MCF 10A (cell line): ENCODE measurements at regions of chr7 and their contacts with region 1.

Region 1: DNA sequence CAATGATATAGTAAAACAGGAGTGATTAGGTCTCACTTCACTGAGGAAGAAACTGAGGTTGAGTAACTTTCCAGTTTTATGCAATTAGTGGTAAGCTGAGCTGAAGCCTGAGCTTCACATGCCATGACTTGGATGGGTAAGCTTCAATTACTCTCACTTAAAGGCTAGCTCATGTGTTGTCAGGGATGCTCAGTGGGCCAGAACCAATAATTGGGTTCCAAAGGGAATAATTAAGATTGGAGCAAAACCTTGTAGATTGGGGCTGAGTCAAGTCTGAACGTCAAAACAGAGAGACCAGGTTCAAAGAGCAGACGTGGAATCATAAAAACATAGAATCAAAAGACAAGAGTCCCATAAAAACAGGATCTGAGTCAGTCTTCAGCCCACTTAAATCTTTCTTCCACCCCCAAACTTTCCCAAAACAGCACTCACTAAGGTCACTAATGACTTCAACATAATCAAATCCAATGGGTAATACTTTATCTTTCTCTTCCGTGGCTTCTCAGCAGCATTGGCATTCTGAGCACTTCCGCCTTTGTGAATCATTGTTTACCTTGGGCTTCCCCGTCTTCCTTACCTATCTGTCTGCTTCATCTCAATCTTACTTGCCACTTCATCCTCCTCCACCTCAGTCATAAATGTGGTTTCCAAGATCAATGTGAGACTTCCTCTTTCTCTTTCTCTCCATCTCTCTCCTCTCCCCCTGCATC is 23.0 kb upstream of the EGFR start:
- DNase-seq: peak; percentile 73
- H3K4me3 Mint-ChIP-seq: peak overlapping the region; percentile 11
- H3K27ac Mint-ChIP-seq: peak overlapping the region; percentile 90
- H3K4me1 Mint-ChIP-seq: peaks cover 22% of the 10 kb centered on the region
- H3K27me3 Mint-ChIP-seq: no peaks in the 10 kb centered on the region
- CTCF ChIP-seq: no peak

Region 2: GRCh38 chr7:54985405-54986330 is 10.1 kb before region 1 on chr7:
- CTCF ChIA-PET with region 1: interaction called, 3 read pairs
- POLR2A ChIA-PET with region 1: interaction called, 12 read pairs
- intact Hi-C with region 1: no loop called
- DNase-seq: peak; percentile 81
- H3K4me3 Mint-ChIP-seq: peak overlapping the region; percentile 51
- H3K27ac Mint-ChIP-seq: peak overlapping the region; percentile 97
- H3K4me1 Mint-ChIP-seq: peaks cover 16% of the 10 kb centered on the region
- H3K27me3 Mint-ChIP-seq: no peaks in the 10 kb centered on the region
- CTCF ChIP-seq: no peak